HepG2 (cell line): ENCODE measurements at regions of chr13 and their contacts with region 1.

Region 1: DNA sequence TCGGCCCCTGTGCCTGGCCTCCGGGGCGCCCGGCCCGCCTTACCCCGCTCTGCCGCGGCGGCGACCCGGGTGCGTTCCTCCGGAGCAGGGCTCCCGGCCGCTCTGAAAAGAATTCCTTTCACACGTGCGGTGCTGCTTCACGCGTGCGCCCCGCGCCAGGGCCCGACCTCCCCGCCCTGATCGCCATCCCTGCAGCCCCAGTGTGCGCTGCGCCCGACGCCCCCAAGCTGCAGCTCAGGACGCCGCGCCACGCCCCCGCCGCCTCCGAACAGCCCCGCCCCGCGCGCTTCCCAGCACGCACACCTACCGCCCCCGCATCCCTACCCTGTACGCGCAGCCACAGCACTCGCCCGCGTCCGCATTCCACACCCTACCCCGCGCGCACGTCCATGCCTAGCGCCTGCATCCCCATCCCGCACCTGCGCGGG is at the start of gene GJA3:
- DNase-seq: no peak
- ATAC-seq: peak; percentile 78
- H3K4me3 ChIP-seq: peak within 1 kb of the TSS; percentile 52 to 68 (median 56)
- H3K27ac ChIP-seq: no peak within 1 kb of the TSS
- H3K4me1 ChIP-seq: peaks cover 17% of the 10 kb centered on the region
- H3K27me3 ChIP-seq: peaks cover 0 to 18% of the 10 kb centered on the region in 2 experiments; a peak in 2 of 5 replicates
- CTCF ChIP-seq: no peak
- EP300 ChIP-seq: no peak
- POLR2A ChIP-seq: no peak
- RAD21 ChIP-seq: no peak
- total RNA-seq, gene GJA3: 0.03 and 0.04 TPM in 2 replicates

Region 2: DNA sequence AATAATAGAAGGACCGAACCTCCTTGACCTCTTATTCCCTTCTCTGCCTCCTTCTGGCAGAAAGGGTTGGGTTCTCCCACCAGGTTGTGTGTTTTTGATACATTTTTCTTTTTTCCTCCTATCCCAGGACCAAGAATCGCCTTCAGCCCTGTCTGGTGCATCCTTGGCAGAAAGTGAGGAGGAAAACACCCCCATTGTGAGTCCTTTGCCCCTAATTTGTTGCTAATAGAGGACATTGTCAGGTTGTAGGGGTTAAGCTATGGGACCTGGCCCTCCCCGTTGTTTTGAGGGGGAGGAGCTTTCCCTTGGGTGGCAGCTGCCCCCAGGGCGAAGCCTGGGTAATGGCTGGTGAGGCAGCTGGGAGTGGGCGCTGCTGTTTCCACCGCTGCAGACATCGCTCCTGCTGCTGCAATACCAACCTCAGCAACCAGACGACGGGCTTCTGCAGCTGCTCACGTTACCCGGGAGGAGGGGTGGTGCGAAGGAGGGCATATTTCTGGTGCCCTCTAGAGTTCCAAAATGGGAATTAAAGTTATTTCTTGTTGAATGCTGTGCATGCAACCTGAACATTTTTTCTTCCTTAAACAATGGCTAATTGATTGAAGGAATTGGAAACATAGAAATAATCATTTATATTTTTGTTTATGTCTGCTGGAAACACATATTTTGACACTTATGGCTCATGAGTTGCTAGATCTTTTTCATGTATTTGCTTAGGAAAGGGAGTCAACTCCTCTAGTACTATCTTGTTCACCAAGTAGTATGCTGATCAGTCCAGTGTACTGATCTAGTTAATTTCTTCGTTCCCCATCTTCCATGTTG is 200.8 kb before region 1 on chr13:
- CTCF ChIA-PET with region 1: no interaction called
- POLR2A ChIA-PET with region 1: no interaction called
- in situ Hi-C with region 1: no loop called
- intact Hi-C with region 1: loop called (anchors 5 kb)
- DNase-seq: peak; percentile 90
- ATAC-seq: peak; percentile 82
- H3K4me3 ChIP-seq: peak overlapping the region; percentile 75 to 97 (median 96)
- H3K27ac ChIP-seq: peak overlapping the region; percentile 81
- H3K4me1 ChIP-seq: peaks cover 28% of the 10 kb centered on the region
- H3K27me3 ChIP-seq: no peaks in the 10 kb centered on the region; a peak in 1 of 5 replicates
- CTCF ChIP-seq: peak; percentile 82
- EP300 ChIP-seq: no peak
- POLR2A ChIP-seq: peak in 1 of 2 experiments; percentile 44; a peak in 1 of 4 replicates
- RAD21 ChIP-seq: peak; percentile 68; the same call in 1 of the 2 replicates

Region 3: DNA sequence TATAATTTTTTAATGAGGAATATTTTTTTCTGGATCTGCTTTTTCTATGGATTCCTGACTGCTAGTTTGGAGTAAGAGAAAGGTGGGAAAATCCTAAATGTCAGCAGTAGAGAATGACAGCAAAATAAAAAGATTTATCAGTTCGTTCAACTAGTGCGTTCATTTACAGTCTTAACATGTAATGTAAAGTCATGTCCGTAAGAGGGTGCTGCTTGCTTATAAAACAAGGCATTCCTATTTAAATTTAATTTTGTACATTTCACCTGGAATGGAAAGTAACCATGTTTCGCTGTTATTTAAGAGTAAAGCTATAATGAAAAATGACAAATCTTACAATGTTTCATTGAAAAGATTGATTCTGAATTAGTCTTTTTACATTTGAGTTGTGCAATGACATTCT is 125.7 kb before region 1 on chr13:
- CTCF ChIA-PET with region 1: interaction called, 7 read pairs
- POLR2A ChIA-PET with region 1: no interaction called
- in situ Hi-C with region 1: no loop called
- intact Hi-C with region 1: loop called (anchors 1 kb)
- DNase-seq: no peak
- ATAC-seq: no peak
- H3K4me3 ChIP-seq: no peak overlapping the region
- H3K27ac ChIP-seq: no peak overlapping the region
- H3K4me1 ChIP-seq: no peaks in the 10 kb centered on the region
- H3K27me3 ChIP-seq: no peaks in the 10 kb centered on the region
- CTCF ChIP-seq: 0 out of 2 replicates have a peak, but pooled peaks have one; percentile 22
- EP300 ChIP-seq: no peak
- POLR2A ChIP-seq: no peak
- RAD21 ChIP-seq: no peak

Region 4: DNA sequence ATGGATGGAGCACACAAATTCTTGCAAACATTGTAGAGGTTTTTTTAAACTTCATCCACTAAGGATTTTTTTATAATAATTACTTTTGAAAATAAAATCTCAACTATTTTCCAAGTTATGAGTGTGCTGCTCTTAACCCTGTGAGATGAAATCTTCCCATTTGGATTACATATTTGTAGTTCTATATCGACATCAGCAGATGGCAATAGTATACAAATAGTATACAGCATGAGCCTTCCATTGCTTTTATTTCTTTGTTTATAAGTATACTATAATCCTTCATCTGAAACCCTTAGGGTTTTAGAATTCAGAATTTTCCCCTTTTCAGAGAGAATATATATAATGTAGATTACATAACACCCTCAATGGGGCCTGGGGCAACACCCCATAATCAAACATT is 70.5 kb before region 1 on chr13:
- CTCF ChIA-PET with region 1: no interaction called
- POLR2A ChIA-PET with region 1: no interaction called
- in situ Hi-C with region 1: no loop called
- intact Hi-C with region 1: loop called (anchors 2 kb)
- DNase-seq: no peak
- ATAC-seq: no peak
- H3K4me3 ChIP-seq: no peak overlapping the region
- H3K27ac ChIP-seq: no peak overlapping the region
- H3K4me1 ChIP-seq: no peaks in the 10 kb centered on the region
- H3K27me3 ChIP-seq: no peaks in the 10 kb centered on the region
- CTCF ChIP-seq: 0 out of 2 replicates have a peak, but pooled peaks have one; percentile 11
- EP300 ChIP-seq: no peak
- POLR2A ChIP-seq: no peak
- RAD21 ChIP-seq: no peak

Region 5: DNA sequence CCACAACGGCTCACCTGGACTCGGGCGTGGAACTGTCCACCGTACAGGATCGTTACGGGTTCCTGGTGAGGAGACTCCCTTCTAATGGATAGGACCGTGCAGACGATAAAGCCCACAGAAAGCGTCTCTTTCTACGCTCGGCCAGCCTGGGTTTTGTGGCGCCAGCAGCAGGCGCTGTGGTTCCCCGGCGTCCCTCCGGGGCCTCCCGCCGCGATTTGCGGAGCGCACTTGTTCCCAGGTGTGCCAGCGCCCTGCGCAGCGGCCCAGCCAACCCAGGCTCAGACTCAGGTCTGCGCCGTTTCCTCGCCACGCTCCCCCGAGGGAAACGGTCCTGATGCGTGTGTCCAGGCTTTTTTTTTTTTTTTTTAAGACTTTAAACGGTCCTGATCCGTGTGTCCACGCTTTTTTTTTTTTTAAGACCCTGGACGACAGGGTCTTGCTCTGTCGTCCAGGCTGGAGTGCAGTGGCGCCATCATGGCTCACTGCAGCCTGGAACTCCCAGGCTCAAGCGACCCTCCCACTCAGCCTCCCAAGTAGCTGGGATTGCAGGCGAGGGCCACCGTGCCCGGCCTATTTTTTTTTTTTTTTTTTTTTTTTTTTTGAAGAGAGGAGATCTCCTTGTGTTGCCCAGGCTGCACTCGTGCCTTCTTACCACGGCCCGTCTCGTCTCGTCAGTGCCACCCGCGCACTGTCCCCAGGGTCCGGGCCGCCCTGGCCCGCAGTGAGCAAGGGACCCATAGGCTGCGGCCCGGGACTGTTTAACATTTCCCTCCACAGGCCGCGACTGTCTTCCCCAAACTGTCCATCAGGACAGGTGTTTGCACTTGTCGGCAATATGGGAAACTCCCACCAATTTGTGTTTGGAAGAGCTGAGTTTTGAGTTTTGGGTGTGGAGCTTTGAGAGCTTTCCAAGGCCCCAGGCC is 23.8 kb before region 1 on chr13:
- CTCF ChIA-PET with region 1: interaction called, 3 read pairs
- POLR2A ChIA-PET with region 1: no interaction called
- in situ Hi-C with region 1: no loop called
- intact Hi-C with region 1: loop called (anchors 2 kb)
- DNase-seq: peak; percentile 37
- ATAC-seq: peak; percentile 98
- H3K4me3 ChIP-seq: peak overlapping the region; percentile 23 to 58 (median 40)
- H3K27ac ChIP-seq: no peak overlapping the region
- H3K4me1 ChIP-seq: peaks cover 11% of the 10 kb centered on the region
- H3K27me3 ChIP-seq: peaks cover 0 to 11% of the 10 kb centered on the region in 2 experiments; a peak in 4 of 5 replicates
- CTCF ChIP-seq: peak; percentile 89
- EP300 ChIP-seq: no peak
- POLR2A ChIP-seq: no peak
- RAD21 ChIP-seq: peak; percentile 42; the same call in 1 of the 2 replicates

Region 6: GRCh38 chr13:20174656-20175405 is 14.0 kb after region 1 on chr13:
- CTCF ChIA-PET with region 1: no interaction called
- POLR2A ChIA-PET with region 1: no interaction called
- in situ Hi-C with region 1: no loop called
- intact Hi-C with region 1: no loop called
- DNase-seq: peak; percentile 26
- ATAC-seq: peak; percentile 77
- H3K4me3 ChIP-seq: peak overlapping the region; percentile 3 to 38 (median 12); a peak in 3 of 6 replicates
- H3K27ac ChIP-seq: no peak overlapping the region
- H3K4me1 ChIP-seq: peaks cover 17% of the 10 kb centered on the region
- H3K27me3 ChIP-seq: peaks cover 0 to 35% of the 10 kb centered on the region in 2 experiments; a peak in 4 of 5 replicates
- CTCF ChIP-seq: no peak
- EP300 ChIP-seq: no peak
- POLR2A ChIP-seq: no peak
- RAD21 ChIP-seq: no peak